ENCODE measurements at regions of chr14 and their contacts with region 1.

Region 1: DNA sequence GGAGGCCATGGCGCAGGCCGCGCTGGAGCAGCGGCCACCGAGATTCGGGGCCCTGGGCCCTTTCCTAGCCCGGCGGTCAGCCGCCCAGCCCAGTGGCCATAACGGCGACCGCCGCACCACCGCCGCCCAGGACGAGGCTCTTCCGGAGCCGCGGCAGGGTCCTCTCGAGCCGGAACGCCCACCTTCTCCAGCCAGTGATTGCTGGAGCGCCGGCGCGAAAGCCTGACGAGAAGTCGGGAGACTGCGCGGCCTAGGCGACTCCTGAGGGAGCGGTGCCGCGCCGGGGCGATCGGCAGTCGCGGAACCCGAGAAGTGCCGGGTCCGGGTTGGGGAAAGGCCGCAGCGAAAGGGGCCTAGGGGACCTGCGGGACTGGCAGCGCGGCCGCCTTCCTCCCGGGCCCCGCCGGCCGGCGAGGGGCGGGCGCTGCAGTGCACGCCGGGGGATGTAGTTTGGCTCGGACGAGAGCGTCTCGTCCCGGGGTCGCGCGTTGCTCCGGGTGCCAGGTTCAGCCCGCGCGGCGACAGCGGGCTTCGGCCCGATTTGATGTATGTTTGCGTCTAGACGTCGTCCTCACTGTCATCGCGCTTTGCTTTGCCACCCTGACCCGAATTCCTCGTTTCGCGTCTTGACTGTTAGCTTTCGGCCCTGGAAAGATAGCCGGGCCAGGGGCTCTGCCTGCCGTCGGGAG is at the start of gene VTI1B:
- DNase-seq: peak; percentile 84 to 85
- ATAC-seq: peak; percentile 96 to 98 (median 96)
- H3K4me3 ChIP-seq: peak within 1 kb of the TSS; percentile 79 to 99 (median 95)
- H3K27ac ChIP-seq: peak within 1 kb of the TSS; percentile 96 to 100 (median 100)
- H3K4me1 ChIP-seq: peaks cover 7 to 34% (median 25%) of the 10 kb centered on the region in 9 donors
- H3K27me3 ChIP-seq: no peaks in the 10 kb centered on the region
- CTCF ChIP-seq: peak in 4 of 9 donors; percentile 22 to 46 (median 42)
- total RNA-seq, gene VTI1B: 110 to 153 (median 125) TPM

Region 2: GRCh38 chr14:67599698-67600561 is 74.7 kb before region 1 on chr14 and contains the start of gene PIGH:
- intact Hi-C with region 1: loop called in 1 of 10 experiments (anchors 5 kb)
- DNase-seq: peak; percentile 91 to 94
- ATAC-seq: peak; percentile 99 to 100 (median 100)
- H3K4me3 ChIP-seq: peak within 1 kb of the TSS; percentile 63 to 99 (median 79)
- H3K27ac ChIP-seq: peak within 1 kb of the TSS in 9 of 10 donors; percentile 84 to 91 (median 87)
- H3K4me1 ChIP-seq: peaks cover 0 to 23% (median 10%) of the 10 kb centered on the region in 9 donors
- H3K27me3 ChIP-seq: no peaks in the 10 kb centered on the region
- CTCF ChIP-seq: peak; percentile 22 to 75 (median 58)
- total RNA-seq, gene PIGH: 9.0 to 16.8 (median 10.2) TPM